Activated naive CD4-positive, alpha-beta T cell treated with anti-CD3 and anti-CD28 coated beads, Interleukin-2, amount 10 ng/mL, durations not matched to agents 7 days and 5 days (primary cell): ENCODE measurements at regions of chr1 and their contacts with region 1.

Region 1: GRCh38 chr1:203340112-203340804 is 10.7 kb downstream of the FMOD start:
- DNase-seq: peak; percentile 73
- H3K4me3 Mint-ChIP-seq: no peak overlapping the region
- H3K27ac Mint-ChIP-seq: no peak overlapping the region
- H3K4me1 Mint-ChIP-seq: peaks cover 34% of the 10 kb centered on the region
- H3K27me3 Mint-ChIP-seq: peaks cover 52% of the 10 kb centered on the region

Region 2: GRCh38 chr1:203273206-203273868 is 66.9 kb before region 1 on chr1:
- CTCF ChIA-PET with region 1: interaction called, 591 read pairs
- DNase-seq: peak; percentile 93
- H3K4me3 Mint-ChIP-seq: peak overlapping the region; percentile 67
- H3K27ac Mint-ChIP-seq: peak overlapping the region; percentile 84
- H3K4me1 Mint-ChIP-seq: peaks cover 68% of the 10 kb centered on the region
- H3K27me3 Mint-ChIP-seq: no peaks in the 10 kb centered on the region

Region 3: GRCh38 chr1:203320591-203321272 is 19.5 kb before region 1 on chr1:
- CTCF ChIA-PET with region 1: interaction called, 21 read pairs
- DNase-seq: peak; percentile 92
- H3K4me3 Mint-ChIP-seq: peak overlapping the region; percentile 67
- H3K27ac Mint-ChIP-seq: peak overlapping the region; percentile 98
- H3K4me1 Mint-ChIP-seq: peaks cover 78% of the 10 kb centered on the region
- H3K27me3 Mint-ChIP-seq: peaks cover 4% of the 10 kb centered on the region

Region 4: DNA sequence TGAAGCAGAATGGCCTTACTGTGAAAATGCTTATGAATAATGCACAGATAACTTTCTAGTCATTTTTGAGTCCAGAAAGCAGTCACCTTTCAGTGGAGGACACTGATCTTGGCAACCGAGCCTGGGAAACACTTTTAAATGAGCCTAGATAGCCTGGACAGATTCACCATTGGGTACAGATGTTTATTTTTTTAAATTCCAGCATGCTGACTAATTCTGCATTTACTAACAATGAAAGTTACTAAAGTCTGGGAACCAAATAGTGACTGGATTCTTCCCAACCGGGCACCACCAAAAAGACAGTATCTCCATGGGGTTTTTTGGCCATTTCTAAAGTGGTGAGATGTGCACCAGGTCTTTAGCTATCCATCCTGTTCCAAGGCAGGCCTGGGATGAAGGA is 14.0 kb after region 1 on chr1:
- CTCF ChIA-PET with region 1: interaction called, 20 read pairs
- DNase-seq: no peak
- H3K4me3 Mint-ChIP-seq: no peak overlapping the region
- H3K27ac Mint-ChIP-seq: no peak overlapping the region
- H3K4me1 Mint-ChIP-seq: peaks cover 5% of the 10 kb centered on the region
- H3K27me3 Mint-ChIP-seq: peaks cover 69% of the 10 kb centered on the region

Region 5: DNA sequence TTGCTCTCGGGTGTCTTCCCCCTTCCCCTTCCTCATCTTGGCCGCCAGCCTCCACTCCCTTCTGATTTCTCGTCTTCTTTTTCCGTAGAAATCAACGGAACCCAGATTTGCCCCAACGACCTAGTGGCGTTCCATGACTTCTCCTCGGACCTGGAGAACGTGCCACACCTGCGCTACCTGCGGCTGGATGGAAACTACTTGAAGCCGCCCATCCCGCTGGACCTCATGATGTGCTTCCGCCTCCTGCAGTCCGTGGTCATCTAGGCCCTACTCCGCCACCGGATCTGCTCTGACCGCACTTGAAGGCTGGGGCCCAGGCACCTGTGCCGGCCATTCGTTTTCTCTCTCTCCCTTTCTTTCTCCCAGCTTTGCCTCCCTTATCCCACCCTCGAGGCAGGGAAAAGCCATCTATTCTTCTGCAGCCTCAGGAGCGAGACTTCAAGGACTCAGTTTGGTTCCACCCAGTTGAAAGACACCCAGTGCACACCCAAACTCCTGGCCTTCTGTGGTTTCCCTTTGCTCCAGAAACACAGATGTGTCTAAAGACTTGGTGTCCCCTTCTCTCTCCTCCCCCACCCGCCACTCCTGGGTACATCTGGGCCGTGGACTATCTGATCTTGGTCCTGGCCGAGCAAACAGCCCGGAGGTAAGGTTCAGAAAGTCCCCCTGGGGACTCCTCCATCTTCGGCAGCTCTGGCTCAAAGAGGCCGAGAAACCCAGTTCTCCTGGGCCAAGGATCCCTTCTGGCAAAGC is 146.5 kb after region 1 on chr1:
- CTCF ChIA-PET with region 1: interaction called, 152 read pairs
- DNase-seq: no peak
- H3K4me3 Mint-ChIP-seq: peak overlapping the region; percentile 61
- H3K27ac Mint-ChIP-seq: no peak overlapping the region
- H3K4me1 Mint-ChIP-seq: peaks cover 6% of the 10 kb centered on the region
- H3K27me3 Mint-ChIP-seq: peaks cover 16% of the 10 kb centered on the region